CD4-positive, alpha-beta T cell (primary cell): ENCODE measurements at regions of chr9 and their contacts with region 1.

Region 1: GRCh38 chr9:89497978-89498851 is at the start of gene SEMA4D:
- DNase-seq: peak in 12 of 14 experiments; percentile 37 to 84 (median 58)
- ATAC-seq: peak; percentile 4
- H3K4me3 ChIP-seq: peak within 1 kb of the TSS; percentile 83
- H3K4me3 Mint-ChIP-seq: peak within 1 kb of the TSS; percentile 100
- H3K27ac ChIP-seq: peak within 1 kb of the TSS; percentile 60 to 68
- H3K27ac Mint-ChIP-seq: peak within 1 kb of the TSS; percentile 90
- H3K4me1 ChIP-seq: peaks cover 84% of the 10 kb centered on the region
- H3K4me1 Mint-ChIP-seq: peaks cover 92% of the 10 kb centered on the region
- H3K27me3 ChIP-seq: no peaks in the 10 kb centered on the region
- H3K27me3 Mint-ChIP-seq: no peaks in the 10 kb centered on the region
- CTCF ChIP-seq: no peak
- total RNA-seq, gene SEMA4D: 399 to 430 TPM

Region 2: DNA sequence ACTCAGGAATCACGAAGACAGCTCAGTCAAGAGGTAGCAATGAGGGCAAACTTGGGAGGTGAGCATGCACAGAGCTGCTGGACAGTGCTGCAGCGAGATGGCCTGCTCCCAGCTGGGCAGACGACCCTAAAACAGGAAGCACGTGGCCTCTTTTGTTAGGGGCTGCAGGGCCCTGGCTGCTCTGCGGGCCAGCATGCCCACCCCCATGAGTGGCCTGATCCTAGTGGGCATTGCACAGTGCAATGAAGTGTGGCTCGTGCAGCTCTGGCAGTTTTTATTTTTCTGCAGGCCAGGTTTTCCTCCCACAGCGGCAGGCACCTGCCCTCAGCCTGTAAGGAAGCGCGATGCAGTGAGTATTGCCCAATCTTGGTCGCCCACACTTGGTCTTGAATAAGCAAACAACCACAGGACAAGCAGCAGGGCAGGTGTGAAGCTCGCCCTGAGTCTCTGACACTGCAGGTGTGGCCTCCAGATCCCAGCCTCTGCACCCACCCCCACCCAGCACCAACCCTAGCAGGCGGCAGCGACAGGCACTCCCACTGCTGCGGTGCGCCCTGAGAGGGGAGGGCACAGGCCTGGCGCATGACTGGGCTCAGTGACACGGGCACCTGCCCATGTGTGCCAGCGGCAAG is 61.1 kb before region 1 on chr9:
- CTCF ChIA-PET with region 1: no interaction called
- POLR2A ChIA-PET with region 1: interaction called, 3 read pairs
- intact Hi-C with region 1: loop called in 1 of 2 experiments (anchors 5 kb)
- DNase-seq: peak; percentile 37 to 90 (median 66)
- ATAC-seq: peak; percentile 92
- H3K4me3 ChIP-seq: peak overlapping the region; percentile 6
- H3K4me3 Mint-ChIP-seq: peak overlapping the region; percentile 82
- H3K27ac ChIP-seq: peak overlapping the region; percentile 0 to 57
- H3K27ac Mint-ChIP-seq: peak overlapping the region; percentile 96
- H3K4me1 ChIP-seq: peaks cover 99% of the 10 kb centered on the region
- H3K4me1 Mint-ChIP-seq: peaks cover 92% of the 10 kb centered on the region
- H3K27me3 ChIP-seq: no peaks in the 10 kb centered on the region
- H3K27me3 Mint-ChIP-seq: no peaks in the 10 kb centered on the region
- CTCF ChIP-seq: no peak

Region 3: DNA sequence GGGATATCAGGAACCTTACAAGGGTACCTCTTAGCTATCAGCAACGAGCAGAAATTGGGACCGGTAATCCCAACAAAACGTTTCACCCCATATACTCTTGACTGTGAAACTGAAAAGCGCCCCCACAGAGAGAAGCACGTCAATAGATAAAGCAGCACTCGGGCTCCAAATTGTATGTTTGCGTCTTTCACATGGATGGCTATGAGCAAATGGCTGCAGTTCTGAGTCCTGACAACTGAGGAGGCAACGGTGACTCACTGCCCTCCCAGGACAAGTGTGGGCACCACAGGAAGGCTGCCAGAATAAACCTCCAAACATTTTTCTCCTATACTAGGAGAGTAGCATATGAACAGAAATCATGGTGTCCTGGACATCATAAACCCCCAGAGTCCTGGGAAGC is 37.0 kb before region 1 on chr9:
- CTCF ChIA-PET with region 1: interaction called, 3 read pairs
- POLR2A ChIA-PET with region 1: interaction called, 8 read pairs
- intact Hi-C with region 1: loop called (anchors 2 to 5 kb)
- DNase-seq: peak in 4 of 14 experiments; percentile 28 to 63 (median 56)
- ATAC-seq: peak; percentile 14
- H3K4me3 ChIP-seq: no peak overlapping the region
- H3K4me3 Mint-ChIP-seq: peak overlapping the region; percentile 71
- H3K27ac ChIP-seq: peak overlapping the region; percentile 50 to 62
- H3K27ac Mint-ChIP-seq: peak overlapping the region; percentile 96
- H3K4me1 ChIP-seq: peaks cover 97% of the 10 kb centered on the region
- H3K4me1 Mint-ChIP-seq: peaks cover 97% of the 10 kb centered on the region
- H3K27me3 ChIP-seq: no peaks in the 10 kb centered on the region
- H3K27me3 Mint-ChIP-seq: no peaks in the 10 kb centered on the region
- CTCF ChIP-seq: no peak

Region 4: DNA sequence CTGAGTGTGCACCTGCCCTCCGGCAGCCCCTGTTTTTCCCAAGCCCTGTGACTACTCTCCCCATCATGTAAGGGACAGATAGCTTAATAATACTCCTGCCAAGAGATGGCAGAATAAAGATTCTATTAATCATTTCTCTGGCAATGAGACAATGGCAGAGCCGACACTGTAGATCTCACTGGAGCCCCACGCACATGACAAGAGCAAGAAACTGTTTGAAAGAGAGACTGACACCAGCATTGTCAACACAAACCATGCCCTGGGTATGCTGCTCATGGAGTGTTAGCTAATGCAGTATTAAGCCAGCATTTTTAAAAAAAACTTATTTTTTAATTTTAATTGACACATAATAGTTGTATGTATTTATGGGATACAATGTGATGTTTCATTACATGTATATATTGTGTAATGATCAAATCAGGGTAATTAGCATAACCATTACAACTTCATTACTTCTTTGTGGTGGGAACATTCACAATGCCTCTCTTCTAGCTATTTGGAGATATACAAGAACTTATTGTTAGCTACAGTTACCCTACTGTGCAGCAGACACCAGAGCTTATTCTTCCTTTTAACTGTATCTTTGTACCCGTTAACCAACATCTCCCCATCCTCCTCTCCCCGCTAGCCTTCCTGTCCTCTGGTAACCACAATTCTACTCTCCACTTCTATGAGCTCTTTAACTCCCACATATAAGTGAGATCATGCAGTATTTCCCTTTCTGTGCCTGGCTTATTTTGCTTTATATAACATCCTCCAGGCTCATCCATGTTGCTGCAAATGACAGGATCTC is 31.2 kb after region 1 on chr9:
- CTCF ChIA-PET with region 1: no interaction called
- POLR2A ChIA-PET with region 1: interaction called, 39 read pairs
- intact Hi-C with region 1: loop called (anchors 1 to 2 kb)
- DNase-seq: peak in 4 of 14 experiments; percentile 51 to 73 (median 52)
- ATAC-seq: peak; percentile 83
- H3K4me3 ChIP-seq: no peak overlapping the region
- H3K4me3 Mint-ChIP-seq: peak overlapping the region; percentile 36
- H3K27ac ChIP-seq: peak overlapping the region; percentile 23 to 27
- H3K27ac Mint-ChIP-seq: peak overlapping the region; percentile 94
- H3K4me1 ChIP-seq: peaks cover 98% of the 10 kb centered on the region
- H3K4me1 Mint-ChIP-seq: peaks cover 96% of the 10 kb centered on the region
- H3K27me3 ChIP-seq: no peaks in the 10 kb centered on the region
- H3K27me3 Mint-ChIP-seq: no peaks in the 10 kb centered on the region
- CTCF ChIP-seq: no peak